Esophagus muscularis mucosa (tissue), 4 donors: ENCODE measurements at regions of chr12 and their contacts with region 1.

Region 1: GRCh38 chr12:12786716-12787601 is 1.5 kb downstream of the APOLD1 start:
- DNase-seq: no peak
- H3K4me3 ChIP-seq: peak overlapping the region; percentile 60 to 75 (median 64)
- H3K27ac ChIP-seq: peak overlapping the region; percentile 85 to 95 (median 92)
- H3K4me1 ChIP-seq: peaks cover 18 to 38% (median 35%) of the 10 kb centered on the region in 4 donors
- H3K27me3 ChIP-seq: no peaks in the 10 kb centered on the region
- CTCF ChIP-seq: peak; percentile 9 to 42 (median 34)
- EP300 ChIP-seq: no peak
- POLR2A ChIP-seq: peak; percentile 45

Region 2: GRCh38 chr12:12408265-12408690 is 378.7 kb before region 1 on chr12:
- intact Hi-C with region 1: no loop called
- DNase-seq: no peak
- H3K4me3 ChIP-seq: no peak overlapping the region
- H3K27ac ChIP-seq: no peak overlapping the region
- H3K4me1 ChIP-seq: peaks cover 11 to 29% (median 14%) of the 10 kb centered on the region in 4 donors
- H3K27me3 ChIP-seq: no peaks in the 10 kb centered on the region
- CTCF ChIP-seq: no peak
- EP300 ChIP-seq: no peak
- POLR2A ChIP-seq: no peak

Region 3: DNA sequence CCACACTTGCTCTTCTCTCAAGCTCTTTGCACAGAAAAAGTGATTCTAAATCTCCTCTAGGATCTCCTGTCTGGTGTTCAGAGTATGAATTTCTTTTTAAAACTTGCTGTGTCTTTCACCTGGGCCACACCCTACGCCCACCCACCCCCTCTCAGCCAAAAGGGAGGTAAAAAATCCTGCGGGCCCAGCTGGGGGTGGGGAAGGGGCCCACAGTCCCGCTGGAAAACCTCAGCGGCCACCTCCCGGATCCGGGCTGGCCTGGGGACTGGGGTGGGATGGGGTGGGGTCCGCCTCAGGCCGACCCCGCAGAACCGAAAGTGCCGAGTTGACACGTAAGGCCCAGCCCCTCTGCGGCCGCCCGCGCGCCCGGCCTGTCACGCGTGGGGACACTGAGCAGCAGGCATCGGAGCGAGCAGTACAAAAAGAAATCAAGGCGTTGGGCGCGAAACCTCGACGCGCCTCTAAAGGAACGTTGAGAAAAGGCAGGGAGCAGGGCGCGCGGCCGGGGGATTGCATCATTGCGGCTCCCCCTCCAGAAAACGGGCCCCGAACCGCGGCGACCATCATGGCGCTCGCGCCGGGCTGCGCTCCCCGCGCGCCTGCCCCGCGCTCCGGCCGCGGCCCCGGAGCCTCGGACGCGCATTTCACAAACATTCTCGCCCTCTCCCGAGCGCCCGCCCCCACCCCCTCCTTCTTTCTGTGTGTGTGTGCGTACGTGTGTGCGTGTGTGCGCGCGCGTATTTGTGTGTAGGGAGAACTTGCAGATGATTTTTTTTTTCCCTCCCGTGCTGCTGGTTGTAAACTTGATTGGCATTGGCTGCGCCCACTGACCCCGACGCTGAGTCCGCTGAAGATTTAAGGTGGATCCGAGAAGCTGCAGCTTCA is 62.1 kb before region 1 on chr12:
- intact Hi-C with region 1: loop called (anchors 5 kb)
- DNase-seq: peak; percentile 98
- H3K4me3 ChIP-seq: peak overlapping the region; percentile 69 to 76 (median 72)
- H3K27ac ChIP-seq: peak overlapping the region; percentile 98 to 100 (median 99)
- H3K4me1 ChIP-seq: peaks cover 32 to 47% (median 44%) of the 10 kb centered on the region in 4 donors
- H3K27me3 ChIP-seq: no peaks in the 10 kb centered on the region
- CTCF ChIP-seq: peak in 1 of 3 experiments; percentile 29
- EP300 ChIP-seq: no peak
- POLR2A ChIP-seq: peak; percentile 71

Region 4: DNA sequence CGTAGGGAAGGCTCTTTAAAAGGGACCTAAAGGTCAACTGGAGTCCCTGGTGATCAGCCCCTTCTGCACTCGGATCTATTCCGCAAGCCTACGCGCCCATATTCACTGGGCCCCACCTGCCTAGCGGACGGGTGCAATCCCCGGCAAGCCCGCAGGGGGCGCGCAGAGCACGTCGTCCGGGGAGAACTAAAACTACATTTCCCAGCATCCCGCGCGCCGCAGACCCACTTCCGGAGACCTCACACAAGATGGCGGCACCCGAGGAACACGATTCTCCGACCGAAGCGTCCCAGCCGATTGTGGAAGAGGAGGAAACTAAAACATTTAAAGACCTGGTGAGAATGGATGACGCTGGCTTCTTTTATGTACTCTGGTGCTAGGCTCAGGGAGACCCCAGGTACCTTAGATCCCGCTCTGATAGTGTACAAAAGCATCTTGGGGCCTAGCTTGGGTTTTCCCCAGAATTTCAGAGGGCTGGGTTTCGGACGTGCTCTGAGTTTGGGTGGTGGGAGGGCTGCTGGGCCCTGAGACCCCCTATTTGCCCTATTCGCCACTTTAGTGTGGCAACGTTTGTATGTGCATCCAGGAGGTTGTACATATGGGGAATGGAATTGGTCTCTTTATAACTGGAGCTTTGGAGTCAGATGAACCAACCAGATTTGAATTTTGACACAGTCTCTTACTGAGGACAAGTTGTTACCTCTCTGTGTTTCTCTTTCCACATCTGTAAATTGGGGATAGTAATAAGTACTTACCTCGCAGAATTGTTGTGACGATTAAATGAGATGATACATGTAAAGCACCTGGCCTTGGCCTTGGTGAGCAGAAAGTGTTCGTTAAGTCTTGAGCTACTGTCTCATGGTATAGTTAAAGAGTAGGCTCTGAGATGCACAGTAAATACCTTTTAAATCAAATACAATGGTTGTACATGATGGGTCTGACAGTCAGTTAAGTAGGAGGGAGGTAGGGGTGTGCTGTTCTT is 26.5 kb after region 1 on chr12 and contains the start of gene DDX47:
- intact Hi-C with region 1: loop called (anchors 2 kb)
- DNase-seq: peak; percentile 99
- H3K4me3 ChIP-seq: peak within 1 kb of the TSS; percentile 71 to 97 (median 78)
- H3K27ac ChIP-seq: peak within 1 kb of the TSS; percentile 69 to 84 (median 76)
- H3K4me1 ChIP-seq: peaks cover 34 to 55% (median 42%) of the 10 kb centered on the region in 4 donors
- H3K27me3 ChIP-seq: no peaks in the 10 kb centered on the region
- CTCF ChIP-seq: peak; percentile 98 to 100 (median 99)
- EP300 ChIP-seq: no peak
- POLR2A ChIP-seq: no peak
- total RNA-seq, gene DDX47: 37.1 to 67.1 (median 53.9) TPM

Region 5: GRCh38 chr12:12890815-12891645 is 104.1 kb after region 1 on chr12 and contains the start of gene GPRC5A:
- intact Hi-C with region 1: loop called (anchors 5 kb)
- DNase-seq: peak; percentile 95
- H3K4me3 ChIP-seq: peak within 1 kb of the TSS; percentile 60 to 66 (median 64)
- H3K27ac ChIP-seq: peak within 1 kb of the TSS; percentile 77 to 81 (median 80)
- H3K4me1 ChIP-seq: peaks cover 8 to 28% (median 20%) of the 10 kb centered on the region in 4 donors
- H3K27me3 ChIP-seq: no peaks in the 10 kb centered on the region
- CTCF ChIP-seq: peak in 2 of 3 experiments; percentile 12 to 16
- EP300 ChIP-seq: no peak
- POLR2A ChIP-seq: peak; percentile 37
- total RNA-seq, gene GPRC5A: 2.9 to 30.0 (median 3.8) TPM

Region 6: DNA sequence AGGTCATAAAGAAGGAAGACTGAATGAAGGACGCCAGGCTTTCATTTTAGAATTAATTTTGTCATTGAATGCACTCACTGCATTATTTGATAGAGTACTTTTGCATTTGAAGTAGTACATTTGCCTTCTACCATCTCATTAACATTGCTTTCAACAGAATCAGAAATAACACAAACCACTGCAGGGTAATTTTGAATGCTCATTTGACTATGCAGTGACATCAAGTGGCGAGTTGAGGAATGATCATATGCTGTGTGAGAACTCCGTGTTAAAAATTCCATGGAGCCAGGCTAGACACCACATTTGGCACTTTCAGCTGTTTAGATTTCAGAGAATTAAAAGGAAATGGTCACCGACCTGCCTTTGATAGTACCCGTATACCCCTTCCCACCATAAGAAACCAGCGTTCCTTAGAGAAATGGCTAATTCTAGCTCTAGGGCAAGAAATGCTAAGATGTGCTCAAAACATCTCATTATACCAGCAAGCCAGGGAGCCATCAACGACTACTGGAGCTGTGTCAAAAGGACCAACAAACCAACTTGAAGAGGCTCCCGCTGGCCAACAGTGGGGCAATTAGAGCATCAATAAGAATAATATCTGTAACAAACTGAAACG is 196.6 kb after region 1 on chr12:
- intact Hi-C with region 1: loop called (anchors 10 kb)
- DNase-seq: no peak
- H3K4me3 ChIP-seq: no peak overlapping the region
- H3K27ac ChIP-seq: no peak overlapping the region
- H3K4me1 ChIP-seq: peaks cover 15 to 27% (median 21%) of the 10 kb centered on the region in 4 donors
- H3K27me3 ChIP-seq: no peaks in the 10 kb centered on the region
- CTCF ChIP-seq: peak; percentile 52 to 67 (median 52)
- EP300 ChIP-seq: no peak
- POLR2A ChIP-seq: no peak